A673 (cell line): ENCODE measurements at regions of chr14 and their contacts with region 1.

Region 1: GRCh38 chr14:51351997-51352396 is 112.0 kb downstream of the TMX1 start:
- DNase-seq: no peak
- H3K4me3 ChIP-seq: no peak overlapping the region
- H3K27ac ChIP-seq: no peak overlapping the region
- H3K4me1 ChIP-seq: peaks cover 16% of the 10 kb centered on the region
- H3K27me3 ChIP-seq: no peaks in the 10 kb centered on the region
- CTCF ChIP-seq: no peak

Region 2: DNA sequence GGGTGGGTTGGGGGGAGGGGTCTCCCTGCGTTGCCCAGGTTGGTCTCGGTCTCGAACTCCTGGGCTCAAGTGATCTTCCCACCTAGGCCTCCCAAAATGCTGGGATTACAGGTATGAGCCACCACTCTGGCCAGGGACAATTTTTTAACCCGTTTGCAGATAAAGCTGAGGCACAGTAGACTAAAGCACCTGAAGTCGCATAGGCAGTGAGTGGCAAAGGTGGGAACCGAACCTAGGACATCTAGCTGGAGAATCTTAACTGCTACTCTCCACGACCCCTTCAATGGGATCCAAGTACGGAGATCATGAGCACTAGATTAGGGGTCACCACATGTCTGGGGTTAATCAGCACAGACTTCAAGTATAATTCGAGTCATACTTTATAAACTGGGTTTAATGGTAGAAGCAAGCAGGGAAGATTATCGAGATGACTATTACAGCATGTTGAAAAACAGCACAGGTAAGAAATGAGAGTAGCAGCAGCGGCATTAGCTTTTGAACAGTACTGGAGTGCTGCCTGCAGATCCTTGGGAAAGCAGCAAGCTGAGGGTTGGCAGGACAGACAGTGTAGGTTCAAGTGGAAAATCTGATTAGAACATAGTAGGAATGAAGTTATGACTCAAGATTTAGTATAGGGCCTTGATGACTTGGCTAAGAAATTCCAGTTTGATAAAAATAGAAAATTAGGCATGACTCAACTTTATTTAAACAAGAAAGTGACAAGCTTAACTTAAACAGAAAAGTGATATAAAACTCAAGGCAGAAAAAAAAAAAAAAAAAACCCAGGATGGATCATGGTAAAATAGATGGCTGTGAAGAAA is 693.0 kb after region 1 on chr14:
- CTCF ChIA-PET with region 1: interaction called, 10 read pairs
- POLR2A ChIA-PET with region 1: no interaction called
- intact Hi-C with region 1: no loop called
- DNase-seq: peak; percentile 39
- H3K4me3 ChIP-seq: no peak overlapping the region
- H3K27ac ChIP-seq: no peak overlapping the region
- H3K4me1 ChIP-seq: peaks cover 36% of the 10 kb centered on the region
- H3K27me3 ChIP-seq: no peaks in the 10 kb centered on the region
- CTCF ChIP-seq: no peak